Activated CD4-positive, alpha-beta T cell treated with anti-CD3 and anti-CD28 coated beads, Interleukin-2, amount 10 ng/mL, durations not matched to agents 24 days and 14 days (primary cell): ENCODE measurements at regions of chr2 and their contacts with region 1.

Region 1: GRCh38 chr2:45169339-45170190 is 160.3 kb upstream of the SIX2 start:
- DNase-seq: no peak
- H3K4me3 Mint-ChIP-seq: peak overlapping the region; percentile 47
- H3K27ac Mint-ChIP-seq: no peak overlapping the region
- H3K4me1 Mint-ChIP-seq: peaks cover 2% of the 10 kb centered on the region
- H3K27me3 Mint-ChIP-seq: peaks cover 70% of the 10 kb centered on the region

Region 2: GRCh38 chr2:44802777-44803424 is 366.7 kb before region 1 on chr2:
- intact Hi-C with region 1: loop called (anchors 5 kb)
- DNase-seq: no peak
- H3K4me3 Mint-ChIP-seq: no peak overlapping the region
- H3K27ac Mint-ChIP-seq: no peak overlapping the region
- H3K4me1 Mint-ChIP-seq: no peaks in the 10 kb centered on the region
- H3K27me3 Mint-ChIP-seq: peaks cover 87% of the 10 kb centered on the region

Region 3: DNA sequence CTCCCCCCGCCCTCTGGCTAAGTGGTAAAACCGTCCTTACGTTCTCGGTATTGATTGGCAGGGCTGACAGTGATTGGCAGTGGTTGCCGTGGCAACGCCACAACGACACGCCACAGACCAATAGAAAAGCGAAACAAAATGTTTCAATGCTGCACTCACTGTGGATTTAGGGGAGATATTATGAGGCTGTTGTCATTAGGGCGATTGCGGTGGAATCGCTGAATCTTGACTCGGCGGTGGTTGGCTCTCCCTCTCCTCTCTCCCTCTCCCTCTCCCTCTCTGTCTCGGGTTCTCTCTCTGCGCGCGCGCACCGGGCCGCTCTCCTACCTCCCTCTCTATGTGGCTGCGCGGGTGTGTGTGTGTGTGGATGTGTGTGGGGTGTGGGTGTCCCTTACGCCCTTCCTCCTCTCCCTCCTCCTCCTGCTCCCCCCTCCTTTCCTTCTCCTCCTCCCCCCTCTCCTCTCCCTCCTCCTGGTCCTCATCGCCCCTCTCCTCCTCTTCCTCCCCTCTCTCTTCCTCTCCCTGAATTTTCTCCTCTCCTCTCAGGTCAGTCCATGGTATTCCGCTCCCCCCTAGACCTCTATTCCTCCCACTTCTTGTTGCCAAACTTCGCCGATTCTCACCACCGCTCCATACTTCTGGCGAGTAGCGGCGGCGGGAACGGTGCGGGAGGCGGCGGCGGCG is 227.9 kb before region 1 on chr2 and contains the start of gene SIX3:
- intact Hi-C with region 1: loop called (anchors 5 kb)
- DNase-seq: peak; percentile 82
- H3K4me3 Mint-ChIP-seq: peak within 1 kb of the TSS; percentile 81
- H3K27ac Mint-ChIP-seq: peak within 1 kb of the TSS; percentile 67
- H3K4me1 Mint-ChIP-seq: peaks cover 14% of the 10 kb centered on the region
- H3K27me3 Mint-ChIP-seq: peaks cover 79% of the 10 kb centered on the region
- total RNA-seq, gene SIX3: not detected in 2 replicates

Region 4: GRCh38 chr2:45009303-45009927 is 160.2 kb before region 1 on chr2 and contains the start of gene SIX2:
- intact Hi-C with region 1: loop called (anchors 2 kb)
- DNase-seq: peak; percentile 64
- H3K4me3 Mint-ChIP-seq: peak within 1 kb of the TSS; percentile 80
- H3K27ac Mint-ChIP-seq: no peak within 1 kb of the TSS
- H3K4me1 Mint-ChIP-seq: peaks cover 11% of the 10 kb centered on the region
- H3K27me3 Mint-ChIP-seq: peaks cover 77% of the 10 kb centered on the region
- total RNA-seq, gene SIX2: not detected in 2 replicates

Region 5: DNA sequence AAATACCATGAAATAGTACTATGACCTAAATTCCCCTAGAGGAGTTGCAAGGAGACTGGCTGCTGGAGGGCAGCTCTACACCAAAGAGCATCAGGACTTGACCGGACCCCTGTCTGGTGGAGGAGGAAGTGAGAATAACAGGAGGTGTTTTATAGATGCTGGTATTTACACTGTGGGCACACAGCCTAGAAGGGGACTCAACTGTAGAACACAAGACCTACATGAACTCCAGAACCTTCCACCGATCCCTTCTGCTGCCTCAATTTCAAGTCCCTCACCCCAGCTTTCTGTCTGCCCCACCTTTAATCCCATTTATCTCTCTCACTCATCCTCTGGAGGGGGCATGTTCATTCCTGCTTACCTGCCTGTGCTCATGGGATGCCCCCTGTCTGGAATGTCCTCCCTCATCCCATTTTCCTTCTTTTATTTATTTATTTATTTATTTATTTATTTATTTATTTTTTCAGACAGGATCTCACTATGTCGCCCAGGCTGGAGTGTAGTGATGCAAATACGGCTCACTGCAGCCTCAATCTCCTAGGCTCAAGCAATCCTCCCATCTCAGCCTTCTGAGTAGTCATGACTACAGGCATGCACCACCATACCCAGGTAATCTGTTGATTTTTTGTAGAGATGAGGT is 27.2 kb before region 1 on chr2:
- intact Hi-C with region 1: no loop called
- DNase-seq: no peak
- H3K4me3 Mint-ChIP-seq: no peak overlapping the region
- H3K27ac Mint-ChIP-seq: no peak overlapping the region
- H3K4me1 Mint-ChIP-seq: no peaks in the 10 kb centered on the region
- H3K27me3 Mint-ChIP-seq: peaks cover 30% of the 10 kb centered on the region

Region 6: GRCh38 chr2:45190481-45190942 is 20.9 kb after region 1 on chr2:
- intact Hi-C with region 1: no loop called
- DNase-seq: no peak
- H3K4me3 Mint-ChIP-seq: no peak overlapping the region
- H3K27ac Mint-ChIP-seq: no peak overlapping the region
- H3K4me1 Mint-ChIP-seq: no peaks in the 10 kb centered on the region
- H3K27me3 Mint-ChIP-seq: peaks cover 9% of the 10 kb centered on the region

Region 7: GRCh38 chr2:45494269-45494977 is 324.9 kb after region 1 on chr2:
- intact Hi-C with region 1: loop called (anchors 10 kb)
- DNase-seq: peak; percentile 70
- H3K4me3 Mint-ChIP-seq: no peak overlapping the region
- H3K27ac Mint-ChIP-seq: no peak overlapping the region
- H3K4me1 Mint-ChIP-seq: peaks cover 22% of the 10 kb centered on the region
- H3K27me3 Mint-ChIP-seq: no peaks in the 10 kb centered on the region